Heart right ventricle (tissue), 16 donors: ENCODE measurements at regions of chrX and their contacts with region 1.

Region 1: GRCh38 chrX:118595501-118596042 is 100.0 kb downstream of the DOCK11 start:
- DNase-seq: no peak
- ATAC-seq: no peak
- H3K4me3 ChIP-seq: no peak overlapping the region
- H3K27ac ChIP-seq: peak overlapping the region in 1 of 10 donors; percentile 26
- H3K4me1 ChIP-seq: peaks cover 0 to 15% (median 0%) of the 10 kb centered on the region in 9 donors
- H3K27me3 ChIP-seq: peaks cover 0 to 24% (median 0%) of the 10 kb centered on the region in 7 donors
- CTCF ChIP-seq: no peak

Region 2: GRCh38 chrX:118325453-118325852 is 270.1 kb before region 1 on chrX:
- intact Hi-C with region 1: loop called in 1 of 10 experiments (anchors 10 kb)
- DNase-seq: no peak
- ATAC-seq: no peak
- H3K4me3 ChIP-seq: no peak overlapping the region
- H3K27ac ChIP-seq: no peak overlapping the region
- H3K4me1 ChIP-seq: no peaks in the 10 kb centered on the region
- H3K27me3 ChIP-seq: peaks cover 0 to 4% (median 0%) of the 10 kb centered on the region in 7 donors
- CTCF ChIP-seq: peak in 4 of 9 donors; percentile 7 to 29 (median 24)

Region 3: GRCh38 chrX:118459494-118459893 is 136.1 kb before region 1 on chrX:
- intact Hi-C with region 1: loop called in 8 of 10 experiments (anchors 2 to 10 kb)
- DNase-seq: no peak
- ATAC-seq: no peak
- H3K4me3 ChIP-seq: no peak overlapping the region
- H3K27ac ChIP-seq: no peak overlapping the region
- H3K4me1 ChIP-seq: no peaks in the 10 kb centered on the region
- H3K27me3 ChIP-seq: no peaks in the 10 kb centered on the region
- CTCF ChIP-seq: peak in 8 of 9 donors; percentile 4 to 53 (median 50)

Region 4: GRCh38 chrX:118468122-118468521 is 127.5 kb before region 1 on chrX:
- intact Hi-C with region 1: loop called in 2 of 10 experiments (anchors 5 to 10 kb)
- DNase-seq: no peak
- ATAC-seq: peak in 1 of 8 donors; percentile 63
- H3K4me3 ChIP-seq: no peak overlapping the region
- H3K27ac ChIP-seq: no peak overlapping the region
- H3K4me1 ChIP-seq: no peaks in the 10 kb centered on the region
- H3K27me3 ChIP-seq: no peaks in the 10 kb centered on the region
- CTCF ChIP-seq: no peak